GM10248 (cell line): ENCODE measurements at regions of chr17 and their contacts with region 1.

Region 1: GRCh38 chr17:7004398-7005253 is 7.8 kb upstream of the RNASEK start:
- DNase-seq: peak; percentile 69
- CTCF ChIP-seq: peak; percentile 59

Region 2: DNA sequence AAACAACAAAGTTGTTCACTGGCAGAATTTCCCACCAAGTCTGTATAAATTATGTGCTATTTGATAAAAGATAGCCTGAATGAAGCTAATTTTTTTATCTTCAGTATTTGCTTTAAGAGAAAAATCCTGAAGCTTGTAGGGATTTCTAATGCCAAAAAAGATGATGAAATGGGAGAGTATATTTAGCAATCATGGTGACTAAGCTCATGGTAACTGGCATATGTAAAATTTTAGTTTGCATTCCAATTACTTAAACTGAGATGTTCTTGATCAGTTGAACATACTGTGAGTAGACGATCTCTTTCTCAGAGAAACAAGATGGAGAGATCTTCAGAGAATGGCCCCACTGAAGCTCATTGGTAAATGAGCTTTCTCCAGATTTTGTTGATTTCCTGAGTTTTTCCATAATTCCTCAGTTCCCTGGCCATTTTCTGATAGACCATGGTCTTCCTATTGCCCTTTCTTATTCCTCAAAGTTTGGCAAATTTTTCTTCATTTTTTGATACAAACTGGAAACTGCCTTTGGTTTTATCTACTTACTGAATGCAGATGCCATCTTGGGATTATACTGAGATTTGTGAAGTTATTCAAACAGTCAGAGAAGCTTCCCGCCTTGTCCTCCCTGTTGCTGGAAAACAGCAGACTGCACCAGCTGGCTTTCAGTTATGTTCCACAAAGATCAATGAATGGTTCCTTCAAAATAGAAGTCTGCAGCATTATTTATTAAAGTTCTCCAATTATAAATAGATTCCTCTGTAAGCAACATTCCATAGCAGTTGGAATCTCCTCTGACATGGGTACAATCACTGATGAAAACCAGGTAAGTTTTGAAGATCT is 77.1 kb before region 1 on chr17:
- CTCF ChIA-PET with region 1: interaction called, 14 read pairs
- POLR2A ChIA-PET with region 1: no interaction called
- DNase-seq: no peak
- CTCF ChIP-seq: no peak

Region 3: GRCh38 chr17:6981426-6981825 is 23.2 kb before region 1 on chr17:
- CTCF ChIA-PET with region 1: interaction called, 10 read pairs
- POLR2A ChIA-PET with region 1: no interaction called
- DNase-seq: no peak
- CTCF ChIP-seq: no peak

Region 4: GRCh38 chr17:6989779-6990178 is 14.8 kb before region 1 on chr17:
- CTCF ChIA-PET with region 1: interaction called, 24 read pairs
- POLR2A ChIA-PET with region 1: interaction called, 3 read pairs
- DNase-seq: no peak
- CTCF ChIP-seq: no peak

Region 5: GRCh38 chr17:7021993-7022778 is 17.6 kb after region 1 on chr17:
- CTCF ChIA-PET with region 1: interaction called, 46 read pairs
- POLR2A ChIA-PET with region 1: no interaction called
- DNase-seq: peak; percentile 86
- CTCF ChIP-seq: peak; percentile 91